HepG2 (cell line): ENCODE measurements at regions of chr22 and their contacts with region 1.

Region 1: GRCh38 chr22:21641789-21642583 is at the start of gene SDF2L1:
- DNase-seq: peak; percentile 97
- ATAC-seq: peak; percentile 91
- H3K4me3 ChIP-seq: peak within 1 kb of the TSS; percentile 66 to 87 (median 85)
- H3K27ac ChIP-seq: peak within 1 kb of the TSS; percentile 86
- H3K4me1 ChIP-seq: peaks cover 61% of the 10 kb centered on the region
- H3K27me3 ChIP-seq: no peaks in the 10 kb centered on the region
- CTCF ChIP-seq: no peak
- EP300 ChIP-seq: no peak
- POLR2A ChIP-seq: peak; percentile 91 to 96
- RAD21 ChIP-seq: 0 out of 2 replicates have a peak, but pooled peaks have one; percentile 3
- total RNA-seq, gene SDF2L1: 39.7 and 57.4 TPM in 2 replicates

Region 2: DNA sequence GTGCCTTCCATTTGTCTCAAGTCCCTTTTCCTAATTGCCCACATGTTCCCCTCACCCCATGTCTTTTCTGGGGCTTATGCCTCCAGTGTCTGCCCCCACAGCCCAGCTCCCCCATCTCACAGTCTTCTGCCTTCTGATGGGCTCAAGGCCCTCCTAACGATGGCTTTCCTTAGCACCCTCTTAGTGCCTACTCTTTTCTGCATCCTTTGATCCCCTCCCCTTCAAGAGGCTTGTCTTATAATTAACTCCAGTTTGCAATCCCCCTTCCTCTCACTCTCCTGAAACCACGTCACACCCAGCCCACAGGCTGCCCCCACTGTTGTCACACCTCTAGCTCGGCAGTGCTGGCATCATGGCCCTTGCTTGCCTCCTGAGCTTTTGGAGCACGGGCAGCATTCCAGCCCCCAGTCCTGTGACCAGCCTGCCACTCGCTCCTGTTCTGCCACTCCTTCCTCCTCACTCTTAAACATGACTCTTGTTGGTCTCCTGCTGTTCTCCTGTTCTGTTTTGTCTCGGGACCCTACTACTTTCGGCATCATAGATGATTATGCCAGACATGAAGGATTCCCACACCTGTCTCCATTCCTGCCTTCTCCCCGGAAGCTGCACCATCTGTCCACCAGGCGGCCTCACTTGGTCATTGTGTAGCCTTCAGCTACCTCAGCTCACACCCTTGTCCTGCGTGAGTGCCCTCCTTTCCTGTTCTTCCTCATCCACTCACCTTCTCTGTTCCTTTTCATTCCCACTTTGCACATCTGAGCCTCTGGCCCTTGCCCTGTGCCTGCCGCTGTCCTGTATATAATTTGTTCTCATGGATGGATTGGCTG is 48.4 kb before region 1 on chr22:
- CTCF ChIA-PET with region 1: interaction called, 7 read pairs
- POLR2A ChIA-PET with region 1: no interaction called
- in situ Hi-C with region 1: no loop called
- intact Hi-C with region 1: loop called (anchors 5 kb)
- DNase-seq: peak; percentile 35
- ATAC-seq: peak; percentile 91
- H3K4me3 ChIP-seq: no peak overlapping the region
- H3K27ac ChIP-seq: no peak overlapping the region
- H3K4me1 ChIP-seq: no peaks in the 10 kb centered on the region
- H3K27me3 ChIP-seq: no peaks in the 10 kb centered on the region
- CTCF ChIP-seq: peak; percentile 63
- EP300 ChIP-seq: no peak
- POLR2A ChIP-seq: no peak
- RAD21 ChIP-seq: 0 out of 2 replicates have a peak, but pooled peaks have one; percentile 18

Region 3: DNA sequence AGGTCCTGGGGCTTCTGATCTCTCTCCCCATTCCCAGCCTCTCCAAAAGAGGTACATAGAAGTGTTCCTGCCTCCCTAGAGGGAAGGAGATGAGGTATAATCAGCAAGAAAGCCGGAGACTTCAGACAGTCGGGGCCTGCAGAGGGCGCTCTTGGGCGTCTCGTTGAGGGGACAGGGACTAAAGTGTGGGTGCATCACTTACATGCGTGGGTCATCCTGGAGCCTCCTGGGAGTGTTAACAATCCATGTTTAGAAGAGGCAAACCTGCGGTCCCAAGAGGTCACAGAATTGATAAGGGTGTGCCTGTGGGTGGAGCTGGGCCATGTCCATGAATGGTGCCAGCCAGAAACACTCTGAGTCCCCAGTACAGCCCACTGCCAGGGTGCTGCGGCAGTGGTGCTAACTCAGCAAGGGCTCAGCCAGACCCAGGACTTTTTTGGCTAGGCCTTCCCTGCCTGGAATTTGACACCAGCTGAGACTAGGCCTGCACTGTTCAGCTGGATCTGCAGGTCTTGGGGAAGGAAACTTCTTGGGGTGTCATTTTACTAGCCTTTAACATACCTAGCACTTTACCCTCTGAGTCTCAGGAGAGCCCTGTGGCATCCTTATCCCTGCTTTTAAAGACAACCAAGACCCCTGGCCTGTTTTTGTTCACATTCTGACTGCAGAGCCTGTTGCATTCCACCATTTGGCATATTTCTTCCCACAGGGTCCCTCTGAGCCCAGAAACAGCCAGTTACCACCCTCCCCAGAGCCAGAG is 17.7 kb before region 1 on chr22:
- CTCF ChIA-PET with region 1: interaction called, 16 read pairs
- POLR2A ChIA-PET with region 1: interaction called, 58 read pairs
- in situ Hi-C with region 1: no loop called
- intact Hi-C with region 1: loop called (anchors 2 kb)
- DNase-seq: no peak
- ATAC-seq: peak; percentile 32
- H3K4me3 ChIP-seq: no peak overlapping the region
- H3K27ac ChIP-seq: no peak overlapping the region
- H3K4me1 ChIP-seq: peaks cover 16% of the 10 kb centered on the region
- H3K27me3 ChIP-seq: no peaks in the 10 kb centered on the region
- CTCF ChIP-seq: peak; percentile 64
- EP300 ChIP-seq: no peak
- POLR2A ChIP-seq: no peak
- RAD21 ChIP-seq: no peak

Region 4: GRCh38 chr22:21629262-21630149 is 12.5 kb before region 1 on chr22 and contains the start of gene YDJC:
- CTCF ChIA-PET with region 1: interaction called, 16 read pairs
- POLR2A ChIA-PET with region 1: interaction called, 58 read pairs
- in situ Hi-C with region 1: no loop called
- intact Hi-C with region 1: loop called (anchors 2 kb)
- DNase-seq: peak; percentile 90
- ATAC-seq: peak; percentile 88
- H3K4me3 ChIP-seq: peak within 1 kb of the TSS; percentile 85 to 99 (median 91)
- H3K27ac ChIP-seq: peak within 1 kb of the TSS; percentile 79
- H3K4me1 ChIP-seq: peaks cover 32% of the 10 kb centered on the region
- H3K27me3 ChIP-seq: no peaks in the 10 kb centered on the region
- CTCF ChIP-seq: peak; percentile 93
- EP300 ChIP-seq: no peak
- POLR2A ChIP-seq: peak; percentile 85 to 93
- RAD21 ChIP-seq: peak; percentile 16; the same call in 1 of the 2 replicates
- total RNA-seq, gene YDJC: 27.0 and 32.0 TPM in 2 replicates

Region 5: GRCh38 chr22:21652010-21652546 is 10.1 kb after region 1 on chr22:
- CTCF ChIA-PET with region 1: no interaction called
- POLR2A ChIA-PET with region 1: interaction called, 10 read pairs
- in situ Hi-C with region 1: no loop called
- intact Hi-C with region 1: no loop called
- DNase-seq: peak; percentile 84
- ATAC-seq: peak; percentile 95
- H3K4me3 ChIP-seq: peak overlapping the region; percentile 64 to 86 (median 77)
- H3K27ac ChIP-seq: peak overlapping the region; percentile 77
- H3K4me1 ChIP-seq: peaks cover 33% of the 10 kb centered on the region
- H3K27me3 ChIP-seq: no peaks in the 10 kb centered on the region; a peak in 1 of 5 replicates
- CTCF ChIP-seq: no peak
- EP300 ChIP-seq: no peak
- POLR2A ChIP-seq: peak; percentile 56 to 65
- RAD21 ChIP-seq: no peak

Region 6: DNA sequence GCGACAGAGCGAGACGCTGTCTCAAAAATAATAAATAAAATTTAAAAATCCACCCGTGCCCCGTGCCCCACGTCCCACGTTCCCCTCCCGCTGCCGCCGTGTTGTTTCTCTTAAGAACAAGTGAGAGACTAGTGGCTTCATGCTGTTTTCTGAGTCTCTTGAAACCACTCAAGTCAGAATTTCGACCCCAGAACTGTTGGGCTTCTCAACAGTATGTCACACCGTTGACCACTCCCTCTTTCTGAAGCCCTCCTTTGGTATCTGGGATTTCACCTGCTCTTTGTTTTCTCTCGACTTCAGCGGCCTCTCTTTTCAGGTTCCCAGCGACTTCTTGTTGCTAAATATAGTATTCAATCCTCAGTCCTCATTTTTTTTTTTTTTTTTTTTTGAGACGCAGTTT is 24.8 kb after region 1 on chr22:
- CTCF ChIA-PET with region 1: no interaction called
- POLR2A ChIA-PET with region 1: interaction called, 18 read pairs
- in situ Hi-C with region 1: no loop called
- intact Hi-C with region 1: no loop called
- DNase-seq: no peak
- ATAC-seq: no peak
- H3K4me3 ChIP-seq: peak overlapping the region; percentile 70 to 92 (median 87); a peak in 5 of 6 replicates
- H3K27ac ChIP-seq: peak overlapping the region; percentile 99
- H3K4me1 ChIP-seq: peaks cover 16% of the 10 kb centered on the region
- H3K27me3 ChIP-seq: no peaks in the 10 kb centered on the region
- CTCF ChIP-seq: no peak
- EP300 ChIP-seq: no peak
- POLR2A ChIP-seq: no peak
- RAD21 ChIP-seq: no peak